Activated B cell treated with CpG ODN at 0.5 μM for 24 hours (primary cell): ENCODE measurements at regions of chr1 and their contacts with region 1.

Region 1: DNA sequence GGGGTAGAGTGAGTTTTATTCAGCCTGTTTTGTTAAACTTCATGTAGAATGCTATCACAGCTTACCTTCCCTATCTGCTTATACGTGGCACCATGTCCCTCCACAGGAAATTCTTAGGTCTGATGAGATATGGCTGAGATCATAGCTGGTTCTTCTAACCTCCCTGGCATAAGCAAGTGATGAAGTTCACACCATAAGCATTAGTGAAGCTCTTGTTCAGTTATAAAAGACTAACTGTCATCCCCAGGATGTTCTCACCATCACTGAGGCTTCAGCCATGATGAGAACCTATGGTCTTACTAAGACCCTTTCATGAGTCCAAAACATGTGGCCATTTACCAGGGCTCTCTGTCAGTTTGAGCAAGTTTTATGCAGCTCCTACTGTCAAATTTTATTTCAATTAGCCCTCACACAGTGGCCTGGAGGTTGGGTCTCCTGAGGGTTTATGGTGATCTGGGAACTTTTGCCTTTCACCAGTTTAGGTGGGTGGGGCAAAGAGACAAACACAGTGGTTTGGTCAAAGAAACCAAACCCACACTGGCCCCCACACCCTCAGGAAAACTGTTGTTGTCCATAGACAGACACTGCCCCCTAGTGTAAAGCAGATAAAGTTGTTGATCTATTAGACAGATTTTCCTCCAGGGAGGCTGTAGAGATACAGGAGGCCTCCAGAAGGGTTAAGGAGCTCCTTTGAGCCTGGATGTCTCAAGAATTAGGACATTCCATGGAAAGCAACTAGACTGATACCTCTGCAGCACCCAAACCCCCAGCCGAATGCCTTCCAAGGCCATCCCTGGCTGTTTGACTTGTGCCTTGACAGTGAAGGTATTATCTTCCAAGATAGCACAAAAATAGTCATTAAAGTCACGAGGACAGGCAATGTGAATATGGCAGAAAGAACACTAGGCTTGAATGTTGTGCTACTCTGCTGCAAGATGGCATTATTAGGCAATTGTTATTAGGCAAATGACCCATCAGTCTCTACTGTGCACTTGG is 5.0 kb downstream of the SLC22A15 start:
- DNase-seq: no peak
- ATAC-seq: no peak
- H3K4me3 Mint-ChIP-seq: no peak overlapping the region
- H3K27ac Mint-ChIP-seq: no peak overlapping the region
- H3K4me1 Mint-ChIP-seq: peaks cover 15% of the 10 kb centered on the region
- H3K27me3 Mint-ChIP-seq: no peaks in the 10 kb centered on the region
- CTCF ChIP-seq: no peak

Region 2: DNA sequence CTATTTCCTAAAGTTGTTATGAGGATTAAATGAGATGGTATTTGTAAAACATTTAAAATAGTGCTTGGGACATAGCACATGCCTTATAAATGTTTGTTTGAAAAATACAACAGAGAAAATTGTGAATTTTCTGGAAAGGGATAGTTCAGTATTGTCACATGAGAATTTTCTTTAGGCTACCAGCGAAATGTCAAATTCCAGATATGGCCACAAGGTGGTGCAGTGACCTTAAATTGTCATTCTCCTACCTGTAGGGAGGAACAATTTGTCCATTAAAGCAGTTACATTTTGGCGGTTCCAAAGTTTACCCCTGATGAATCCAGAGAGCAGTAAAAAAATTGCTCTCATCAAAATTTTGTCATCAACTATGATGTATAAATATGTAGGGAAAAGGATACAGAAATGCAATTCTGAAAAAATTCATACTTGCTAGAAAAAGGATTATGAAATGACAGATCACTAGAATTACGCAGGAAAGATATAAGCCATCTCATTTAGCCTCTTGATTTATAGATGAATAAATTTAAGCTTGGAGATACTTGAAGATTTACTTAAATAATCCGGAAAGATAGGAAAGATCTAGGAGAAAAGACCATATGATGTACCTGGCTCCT is 1001.9 kb before region 1 on chr1:
- CTCF ChIA-PET with region 1: no interaction called
- POLR2A ChIA-PET with region 1: no interaction called
- intact Hi-C with region 1: loop called (anchors 10 kb)
- DNase-seq: no peak
- ATAC-seq: no peak
- H3K4me3 Mint-ChIP-seq: no peak overlapping the region
- H3K27ac Mint-ChIP-seq: no peak overlapping the region
- H3K4me1 Mint-ChIP-seq: no peaks in the 10 kb centered on the region
- H3K27me3 Mint-ChIP-seq: peaks cover 27% of the 10 kb centered on the region
- CTCF ChIP-seq: no peak

Region 3: GRCh38 chr1:115807723-115808122 is 173.6 kb before region 1 on chr1:
- CTCF ChIA-PET with region 1: interaction called, 9 read pairs
- POLR2A ChIA-PET with region 1: no interaction called
- intact Hi-C with region 1: loop called (anchors 1 kb)
- DNase-seq: no peak
- ATAC-seq: peak; percentile 28
- H3K4me3 Mint-ChIP-seq: no peak overlapping the region
- H3K27ac Mint-ChIP-seq: no peak overlapping the region
- H3K4me1 Mint-ChIP-seq: no peaks in the 10 kb centered on the region
- H3K27me3 Mint-ChIP-seq: peaks cover 9% of the 10 kb centered on the region
- CTCF ChIP-seq: no peak

Region 4: GRCh38 chr1:115900856-115901255 is 80.4 kb before region 1 on chr1:
- CTCF ChIA-PET with region 1: no interaction called
- POLR2A ChIA-PET with region 1: no interaction called
- intact Hi-C with region 1: no loop called
- DNase-seq: no peak
- ATAC-seq: no peak
- H3K4me3 Mint-ChIP-seq: no peak overlapping the region
- H3K27ac Mint-ChIP-seq: no peak overlapping the region
- H3K4me1 Mint-ChIP-seq: no peaks in the 10 kb centered on the region
- H3K27me3 Mint-ChIP-seq: peaks cover 13% of the 10 kb centered on the region
- CTCF ChIP-seq: no peak

Region 5: GRCh38 chr1:116033322-116033721 is 52.0 kb after region 1 on chr1:
- CTCF ChIA-PET with region 1: no interaction called
- POLR2A ChIA-PET with region 1: no interaction called
- intact Hi-C with region 1: no loop called
- DNase-seq: no peak
- ATAC-seq: no peak
- H3K4me3 Mint-ChIP-seq: no peak overlapping the region
- H3K27ac Mint-ChIP-seq: no peak overlapping the region
- H3K4me1 Mint-ChIP-seq: no peaks in the 10 kb centered on the region
- H3K27me3 Mint-ChIP-seq: no peaks in the 10 kb centered on the region
- CTCF ChIP-seq: no peak